Activated T-helper 2 cell treated with anti-CD3 and anti-CD28 coated beads, Interferon-gamma antibody, Interleukin-2, Interleukin-4, amounts not matched to agents 10 μg/mL and 5 μg/mL and 100 μg/mL, durations not matched to agents 14 hours and 24 hours and 36 hours (primary cell): ENCODE measurements at regions of chr2 and their contacts with region 1.

Region 1: DNA sequence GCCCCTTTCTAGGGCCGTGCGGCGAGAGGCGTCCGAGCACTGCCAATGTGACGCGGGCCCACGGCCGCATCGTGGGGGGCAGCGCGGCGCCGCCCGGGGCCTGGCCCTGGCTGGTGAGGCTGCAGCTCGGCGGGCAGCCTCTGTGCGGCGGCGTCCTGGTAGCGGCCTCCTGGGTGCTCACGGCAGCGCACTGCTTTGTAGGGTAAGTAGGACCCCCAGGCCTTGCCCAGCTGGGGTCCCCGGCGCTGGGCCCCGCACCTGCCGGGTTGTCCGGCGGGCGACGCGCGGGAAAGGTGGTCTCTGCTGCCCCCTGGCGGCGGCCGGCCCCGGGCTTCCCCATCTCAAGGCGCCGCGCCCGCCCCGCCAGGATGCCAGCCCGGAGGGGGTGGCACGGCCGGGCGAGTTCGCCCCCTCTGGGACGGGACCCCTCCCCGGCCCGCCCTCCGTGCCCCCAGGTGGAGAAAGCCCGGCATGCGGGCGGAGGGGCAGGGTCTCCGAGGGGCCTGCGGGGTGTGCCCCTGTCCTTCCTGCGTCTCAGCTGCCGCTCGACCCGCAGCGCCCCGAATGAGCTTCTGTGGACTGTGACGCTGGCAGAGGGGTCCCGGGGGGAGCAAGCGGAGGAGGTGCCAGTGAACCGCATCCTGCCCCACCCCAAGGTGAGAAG is 1.9 kb downstream of the PRSS56 start:
- DNase-seq: peak; percentile 40
- H3K4me3 Mint-ChIP-seq: no peak overlapping the region
- H3K27ac Mint-ChIP-seq: no peak overlapping the region
- H3K4me1 Mint-ChIP-seq: peaks cover 2% of the 10 kb centered on the region
- H3K27me3 Mint-ChIP-seq: peaks cover 34% of the 10 kb centered on the region

Region 2: GRCh38 chr2:232444409-232445148 is 77.5 kb before region 1 on chr2:
- intact Hi-C with region 1: loop called (anchors 5 kb)
- DNase-seq: peak; percentile 55
- H3K4me3 Mint-ChIP-seq: no peak overlapping the region
- H3K27ac Mint-ChIP-seq: no peak overlapping the region
- H3K4me1 Mint-ChIP-seq: peaks cover 4% of the 10 kb centered on the region
- H3K27me3 Mint-ChIP-seq: no peaks in the 10 kb centered on the region

Region 3: GRCh38 chr2:232487385-232488096 is 34.5 kb before region 1 on chr2 and contains the start of gene ECEL1:
- intact Hi-C with region 1: no loop called
- DNase-seq: no peak
- H3K4me3 Mint-ChIP-seq: no peak within 1 kb of the TSS
- H3K27ac Mint-ChIP-seq: no peak within 1 kb of the TSS
- H3K4me1 Mint-ChIP-seq: no peaks in the 10 kb centered on the region
- H3K27me3 Mint-ChIP-seq: peaks cover 37% of the 10 kb centered on the region
- total RNA-seq, gene ECEL1: 0.50 and 0.78 TPM in 2 replicates